ENCODE measurements at regions of chr13 and their contacts with region 1.

Region 1: DNA sequence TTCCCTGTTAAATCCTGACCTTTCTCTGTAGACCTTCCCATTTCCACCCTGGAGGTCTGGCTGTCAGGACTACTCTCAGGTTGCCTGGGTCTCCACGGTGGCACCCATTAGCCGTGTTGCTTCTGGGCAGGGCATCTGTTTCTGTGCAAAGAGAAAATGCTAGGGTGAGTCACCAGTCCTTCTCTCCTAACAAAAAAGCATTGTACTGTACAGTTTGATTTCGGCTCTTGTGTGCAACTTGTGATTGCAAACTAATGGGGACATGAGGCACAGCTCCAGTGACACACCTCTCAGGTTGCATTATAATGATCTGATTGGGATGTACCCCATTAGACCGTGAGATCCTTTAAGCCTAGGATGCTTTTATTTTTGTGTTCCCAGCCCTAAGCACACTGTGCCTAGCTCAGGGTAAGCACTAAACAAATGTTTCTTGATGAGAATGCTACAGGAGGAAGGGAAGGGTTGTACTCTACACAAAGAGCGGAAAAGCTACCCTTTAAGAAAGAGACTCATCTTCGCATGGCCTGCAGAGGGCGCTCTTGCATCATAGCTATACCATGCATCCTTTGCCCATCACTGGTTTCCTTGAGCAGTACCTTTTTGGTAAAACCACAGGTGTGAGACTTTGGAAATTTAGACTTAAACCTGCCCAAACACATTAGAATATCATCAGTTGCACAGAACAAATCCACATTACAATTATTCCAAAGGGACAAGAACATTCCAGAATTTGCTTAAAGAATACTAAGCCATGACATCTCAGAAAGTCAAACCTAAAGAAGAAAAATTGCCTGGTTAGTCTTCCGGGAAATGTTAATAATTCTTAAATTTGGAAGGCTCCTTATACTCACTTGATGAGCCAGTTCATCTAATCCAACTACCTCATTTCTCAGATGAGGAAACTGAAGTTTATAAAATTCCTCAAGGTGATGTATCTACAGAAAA is 20.3 kb upstream of the TRIM13 start:
- DNase-seq: peak; percentile 41 to 67
- ATAC-seq: peak; percentile 76 to 88
- H3K4me3 ChIP-seq: no peak overlapping the region
- H3K27ac ChIP-seq: no peak overlapping the region; a peak in 1 of 6 replicates
- H3K4me1 ChIP-seq: peaks cover 7% of the 10 kb centered on the region; the same call in 1 of the 3 replicates
- CTCF ChIP-seq: peak; percentile 72
- EP300 ChIP-seq: no peak
- POLR2A ChIP-seq: no peak
- RAD21 ChIP-seq: peak; percentile 77 to 88

Region 2: GRCh38 chr13:49954674-49955491 is 21.7 kb before region 1 on chr13:
- CTCF ChIA-PET with region 1: interaction called, 13 read pairs
- POLR2A ChIA-PET with region 1: no interaction called
- DNase-seq: peak in 1 of 2 experiments; percentile 7
- ATAC-seq: no peak
- H3K4me3 ChIP-seq: no peak overlapping the region
- H3K27ac ChIP-seq: no peak overlapping the region
- H3K4me1 ChIP-seq: 0 out of 3 replicates have a peak, but pooled peaks cover 7% of the 10 kb centered on the region
- CTCF ChIP-seq: no peak
- EP300 ChIP-seq: no peak
- POLR2A ChIP-seq: no peak
- RAD21 ChIP-seq: no peak

Region 3: GRCh38 chr13:51070005-51070649 is 1093.5 kb after region 1 on chr13:
- CTCF ChIA-PET with region 1: interaction called, 10 read pairs
- POLR2A ChIA-PET with region 1: no interaction called
- DNase-seq: peak; percentile 28 to 66
- ATAC-seq: peak; percentile 92 to 98
- H3K4me3 ChIP-seq: no peak overlapping the region
- H3K27ac ChIP-seq: no peak overlapping the region
- H3K4me1 ChIP-seq: no peaks in the 10 kb centered on the region
- CTCF ChIP-seq: peak; percentile 74
- EP300 ChIP-seq: no peak
- POLR2A ChIP-seq: no peak
- RAD21 ChIP-seq: peak; percentile 81 to 84